ENCODE measurements at regions of chr15 and their contacts with region 1.

Region 1: GRCh38 chr15:52568601-52569256 is at the start of gene ARPP19:
- DNase-seq: peak; percentile 62 to 94
- H3K4me3 ChIP-seq: peak within 1 kb of the TSS; percentile 81 to 88
- H3K27ac ChIP-seq: peak within 1 kb of the TSS; percentile 93 to 96
- H3K4me1 ChIP-seq: peaks cover 3 to 17% of the 10 kb centered on the region in 2 donors
- H3K27me3 ChIP-seq: no peaks in the 10 kb centered on the region
- CTCF ChIP-seq: peak in 1 of 3 experiments; percentile 21
- total RNA-seq, gene ARPP19: 71.7 TPM

Region 2: DNA sequence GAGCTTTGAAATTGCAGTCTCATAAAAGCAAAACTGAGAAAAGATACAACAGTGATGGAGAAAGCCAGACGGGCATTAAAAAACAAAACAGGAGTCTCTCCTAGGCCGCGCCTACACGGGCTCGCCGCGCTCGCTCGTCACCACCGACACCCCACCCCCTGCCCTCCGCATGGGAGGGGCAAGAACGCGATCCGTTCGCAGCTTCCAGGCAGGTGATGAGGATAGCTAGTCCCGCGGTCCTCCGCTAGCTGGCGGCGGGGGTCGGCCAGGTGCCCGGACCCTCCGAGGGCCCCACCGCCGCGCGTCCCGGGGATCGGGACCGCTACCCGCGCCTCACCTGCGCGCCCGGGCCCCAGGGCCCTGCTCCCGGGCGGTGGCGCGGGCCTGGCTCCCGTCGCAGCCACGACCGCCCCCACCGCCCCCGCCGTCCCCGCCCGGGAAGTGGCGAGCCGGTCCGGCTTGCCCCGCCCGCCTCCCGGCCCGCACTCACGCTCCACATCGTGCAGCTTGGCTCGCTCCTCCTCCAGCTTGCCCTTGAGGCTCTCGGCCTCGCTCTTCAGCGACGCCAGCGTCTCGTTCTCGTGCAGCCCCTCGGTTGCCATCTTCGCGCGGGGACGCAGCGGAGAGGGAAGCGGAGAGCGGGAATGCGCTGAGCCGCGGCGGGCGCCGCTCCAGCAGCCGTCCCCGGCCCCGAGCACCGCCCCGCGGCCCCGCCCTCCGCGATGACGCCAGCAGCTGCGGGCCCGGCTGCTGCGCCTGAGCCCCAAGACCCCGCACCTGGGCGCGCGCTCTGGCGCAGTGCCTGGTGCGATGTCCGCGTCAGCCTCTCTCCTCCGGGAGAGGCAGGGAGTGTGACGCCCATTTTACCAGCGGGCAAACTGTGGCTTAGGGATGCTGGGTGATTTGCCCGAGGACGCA is 389.2 kb before region 1 on chr15:
- intact Hi-C with region 1: loop called (anchors 5 kb)
- DNase-seq: peak; percentile 47 to 91
- H3K4me3 ChIP-seq: peak overlapping the region; percentile 95 to 99
- H3K27ac ChIP-seq: peak overlapping the region; percentile 88 to 95
- H3K4me1 ChIP-seq: peaks cover 0 to 3% of the 10 kb centered on the region in 2 donors
- H3K27me3 ChIP-seq: no peaks in the 10 kb centered on the region
- CTCF ChIP-seq: no peak

Region 3: GRCh38 chr15:52256366-52256765 is 312.4 kb before region 1 on chr15:
- intact Hi-C with region 1: loop called (anchors 10 kb)
- DNase-seq: peak; percentile 21 to 91
- H3K4me3 ChIP-seq: no peak overlapping the region
- H3K27ac ChIP-seq: no peak overlapping the region
- H3K4me1 ChIP-seq: peaks cover 0 to 8% of the 10 kb centered on the region in 2 donors
- H3K27me3 ChIP-seq: no peaks in the 10 kb centered on the region
- CTCF ChIP-seq: peak; percentile 72 to 75 (median 73)

Region 4: DNA sequence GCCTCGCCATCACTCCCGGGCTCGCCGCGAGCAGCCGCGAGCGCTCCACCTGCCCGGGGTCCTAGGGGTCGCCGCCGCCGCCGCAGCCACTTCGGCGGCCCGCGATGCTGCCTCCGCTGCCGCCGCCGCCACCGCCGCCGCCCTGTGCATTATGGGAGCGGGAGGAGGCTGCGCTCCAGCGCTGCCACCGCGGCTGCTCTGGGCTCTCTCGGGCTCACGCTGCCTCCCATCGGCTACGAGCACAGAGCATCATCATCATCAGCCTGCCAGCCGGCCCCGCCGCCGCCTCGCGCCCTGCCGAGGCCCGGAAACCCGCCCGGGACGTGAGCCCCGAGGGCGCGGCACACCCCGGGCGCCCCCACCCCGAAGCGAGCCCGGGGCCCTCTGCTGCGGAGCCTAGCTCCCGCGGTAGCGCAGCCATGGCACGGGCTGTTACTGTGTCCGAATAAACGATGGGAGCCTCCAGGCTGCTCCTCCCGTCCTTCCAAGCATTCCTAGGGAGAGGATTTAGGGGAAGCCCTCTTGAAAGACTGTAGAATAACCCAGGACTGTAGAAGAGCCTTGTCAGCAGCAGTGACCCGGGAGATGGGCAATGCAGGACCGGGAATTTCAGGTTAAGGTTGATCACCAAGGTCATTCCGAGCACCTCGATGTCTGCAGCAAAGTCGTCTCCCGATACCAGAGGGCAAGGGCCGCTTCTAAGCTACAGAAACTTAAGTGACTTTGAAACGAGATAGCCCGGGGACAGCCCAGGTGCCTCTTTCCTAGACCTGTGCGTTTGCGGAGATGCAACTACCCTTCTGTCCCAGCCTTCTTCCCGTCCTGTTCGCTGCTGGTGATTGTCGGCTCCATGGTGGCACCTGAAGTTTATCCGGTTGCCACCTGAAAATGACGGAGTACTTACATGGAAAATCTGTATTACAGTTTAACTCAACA is 39.5 kb before region 1 on chr15:
- intact Hi-C with region 1: loop called (anchors 2 kb)
- DNase-seq: peak in 1 of 2 donors; percentile 85
- H3K4me3 ChIP-seq: peak overlapping the region; percentile 86 to 92
- H3K27ac ChIP-seq: peak overlapping the region; percentile 66 to 87
- H3K4me1 ChIP-seq: peaks cover 0 to 6% of the 10 kb centered on the region in 2 donors
- H3K27me3 ChIP-seq: no peaks in the 10 kb centered on the region
- CTCF ChIP-seq: peak in 1 of 3 experiments; percentile 17

Region 5: DNA sequence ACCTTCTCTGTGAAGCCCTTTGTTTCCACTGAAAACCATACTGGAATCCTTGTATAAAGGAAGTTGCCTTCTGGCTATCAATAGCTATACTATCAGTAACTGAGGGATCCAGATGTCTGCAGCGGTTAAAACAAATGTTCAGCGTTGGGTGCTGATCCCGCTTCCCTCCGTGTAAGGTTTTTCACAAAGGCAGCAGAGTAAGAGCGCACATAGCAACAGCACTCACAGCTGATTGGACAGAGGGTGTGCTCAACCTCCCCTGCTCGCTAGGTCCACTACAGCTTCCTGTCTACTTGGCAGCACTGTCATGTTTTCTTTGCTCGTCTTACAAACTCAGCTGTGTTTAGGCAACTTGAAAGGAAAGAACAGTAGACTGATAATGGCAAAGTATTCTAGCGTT is 83.1 kb after region 1 on chr15:
- intact Hi-C with region 1: loop called (anchors 5 kb)
- DNase-seq: peak in 1 of 2 donors; percentile 69
- H3K4me3 ChIP-seq: peak overlapping the region; percentile 27 to 51
- H3K27ac ChIP-seq: peak overlapping the region; percentile 60 to 66
- H3K4me1 ChIP-seq: peaks cover 2 to 16% of the 10 kb centered on the region in 2 donors
- H3K27me3 ChIP-seq: no peaks in the 10 kb centered on the region
- CTCF ChIP-seq: no peak

Measured in ascending aorta (tissue), 2 donors.